IMR-90 (cell line): ENCODE measurements at regions of chr1 and their contacts with region 1.

Region 1: DNA sequence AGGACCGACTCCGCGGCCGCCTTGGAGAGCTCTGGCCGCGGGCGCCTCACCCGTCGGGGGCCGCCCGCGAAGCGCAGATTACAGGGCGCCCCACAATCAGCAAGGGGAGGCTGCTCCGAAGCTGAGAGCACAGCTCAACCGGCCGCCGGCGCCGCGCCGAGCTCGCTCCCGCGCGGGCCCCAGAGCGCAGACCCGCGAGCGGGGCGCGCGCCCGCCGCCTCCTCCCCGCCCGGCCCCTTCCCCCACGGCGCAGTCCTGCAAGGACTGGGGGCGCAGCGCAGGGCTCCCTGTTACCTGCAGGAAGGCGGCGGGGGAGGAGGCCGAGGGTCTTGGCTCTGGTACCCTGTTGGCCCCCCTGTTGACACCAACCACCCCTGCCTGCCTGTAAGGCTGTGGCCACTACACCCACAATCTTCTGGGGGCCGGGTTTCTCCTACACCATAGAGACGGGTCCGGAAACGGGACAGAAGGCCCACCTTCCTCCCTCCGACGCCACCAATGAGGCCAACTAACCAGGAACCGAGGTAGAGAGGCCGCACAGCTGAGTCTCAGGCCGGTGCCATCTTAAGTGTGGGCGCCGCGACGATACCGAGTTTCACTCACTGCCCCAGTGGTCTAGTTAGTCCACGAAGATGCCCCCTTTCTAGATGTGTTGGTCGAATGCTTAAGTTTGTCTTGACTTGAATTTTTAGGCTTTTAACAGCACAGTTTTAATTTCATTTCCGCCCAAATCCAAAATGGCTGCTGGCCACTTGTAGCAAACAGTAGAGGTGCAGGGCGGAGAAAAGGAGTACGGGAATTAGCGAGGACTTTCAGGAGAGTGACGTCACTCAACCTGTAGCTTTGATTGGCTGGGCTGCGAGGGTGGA is at the start of gene SCYL3:
- DNase-seq: peak; percentile 98
- ATAC-seq: peak; percentile 96
- H3K4me3 ChIP-seq: peak within 1 kb of the TSS; percentile 68
- H3K27ac ChIP-seq: peak within 1 kb of the TSS; percentile 92
- H3K4me1 ChIP-seq: peaks cover 2% of the 10 kb centered on the region; the same call in 1 of the 2 replicates
- H3K27me3 ChIP-seq: 0 out of 2 replicates have a peak, but pooled peaks cover 2% of the 10 kb centered on the region
- CTCF ChIP-seq: no peak
- POLR2A ChIP-seq: peak; percentile 70
- RAD21 ChIP-seq: no peak
- total RNA-seq, gene SCYL3: 6.7 and 8.4 TPM in 2 replicates

Region 2: DNA sequence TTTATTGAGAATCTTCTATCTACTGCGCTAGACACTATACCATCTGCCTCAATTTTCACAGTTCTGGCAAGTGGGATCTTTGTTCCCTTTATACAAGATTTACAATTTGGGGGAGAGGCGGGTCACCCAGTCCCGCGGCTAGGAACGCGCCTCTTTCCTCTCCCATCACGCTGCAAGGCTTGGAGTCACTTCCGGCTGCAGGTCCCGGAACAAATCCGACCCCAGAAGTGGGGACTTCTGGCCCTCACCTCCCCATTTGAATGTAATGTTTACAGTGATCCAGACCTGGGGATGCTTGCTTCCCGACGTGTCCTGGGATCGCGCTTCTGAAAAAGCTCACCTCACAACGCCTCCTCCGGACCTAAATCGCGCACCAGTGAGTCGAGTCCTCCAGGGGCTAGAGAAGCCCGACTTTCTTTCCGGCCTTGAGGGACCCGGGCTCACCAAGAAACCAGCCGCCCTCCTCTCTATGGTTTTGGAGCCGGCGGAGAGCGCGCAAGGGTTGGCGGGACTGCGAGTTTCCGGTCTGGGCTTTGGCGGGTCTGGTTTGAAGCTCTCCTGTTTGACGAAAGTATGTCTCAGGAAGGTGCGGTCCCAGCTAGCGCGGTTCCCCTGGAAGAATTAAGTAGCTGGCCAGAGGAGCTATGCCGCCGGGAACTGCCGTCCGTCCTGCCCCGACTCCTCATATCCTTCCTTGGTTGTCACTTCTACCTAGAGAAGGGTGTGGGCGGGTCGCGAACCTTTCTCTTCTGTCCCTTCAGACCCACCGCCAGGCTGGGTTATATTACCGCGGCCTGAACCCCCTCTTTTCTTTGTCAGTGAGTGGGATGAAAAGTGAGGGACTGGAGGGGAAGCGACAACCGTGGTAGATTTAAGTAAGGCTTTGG is 99.0 kb before region 1 on chr1 and contains the start of gene METTL18:
- CTCF ChIA-PET with region 1: no interaction called
- POLR2A ChIA-PET with region 1: interaction called, 3 read pairs
- dilution Hi-C with region 1: no loop called
- in situ Hi-C with region 1: no loop called
- intact Hi-C with region 1: loop called (anchors 1 kb)
- DNase-seq: peak; percentile 96
- ATAC-seq: peak; percentile 99
- H3K4me3 ChIP-seq: peak within 1 kb of the TSS; percentile 98
- H3K27ac ChIP-seq: peak within 1 kb of the TSS; percentile 100
- H3K4me1 ChIP-seq: no peaks in the 10 kb centered on the region; the same call in 1 of the 2 replicates
- H3K27me3 ChIP-seq: no peaks in the 10 kb centered on the region
- CTCF ChIP-seq: no peak
- POLR2A ChIP-seq: peak; percentile 46; the same call in 1 of the 2 replicates
- RAD21 ChIP-seq: no peak
- total RNA-seq, gene METTL18: 3.4 and 7.2 TPM in 2 replicates